ENCODE measurements at regions of chr1 and their contacts with region 1.

Region 1: GRCh38 chr1:27445177-27445936 is 44.6 kb downstream of the WASF2 start:
- DNase-seq: peak in 1 of 35 experiments; percentile 29
- ATAC-seq: peak in 2 of 4 experiments; percentile 34 to 67
- H3K4me3 ChIP-seq: no peak overlapping the region
- H3K4me3 Mint-ChIP-seq: peak overlapping the region; percentile 22 to 59 (median 44)
- H3K27ac ChIP-seq: no peak overlapping the region
- H3K27ac Mint-ChIP-seq: peak overlapping the region; percentile 77 to 87
- H3K4me1 ChIP-seq: peaks cover 10 to 13% of the 10 kb centered on the region in 2 experiments
- H3K4me1 Mint-ChIP-seq: peaks cover 34 to 51% (median 51%) of the 10 kb centered on the region in 3 donors
- H3K27me3 ChIP-seq: no peaks in the 10 kb centered on the region
- H3K27me3 Mint-ChIP-seq: no peaks in the 10 kb centered on the region

Region 2: GRCh38 chr1:27258598-27258997 is 186.8 kb before region 1 on chr1:
- CTCF ChIA-PET with region 1: interaction called in 1 of 2 experiments, 3 read pairs
- POLR2A ChIA-PET with region 1: interaction called in 1 of 2 experiments, 11 read pairs
- DNase-seq: peak in 7 of 35 experiments; percentile 0 to 35 (median 4)
- ATAC-seq: peak; percentile 54 to 87 (median 74)
- H3K4me3 ChIP-seq: no peak overlapping the region
- H3K4me3 Mint-ChIP-seq: peak overlapping the region in 2 of 3 donors; percentile 56 to 58
- H3K27ac ChIP-seq: no peak overlapping the region
- H3K27ac Mint-ChIP-seq: peak overlapping the region; percentile 51 to 76
- H3K4me1 ChIP-seq: peaks cover 16 to 19% of the 10 kb centered on the region in 2 experiments
- H3K4me1 Mint-ChIP-seq: peaks cover 38 to 42% (median 40%) of the 10 kb centered on the region in 3 donors
- H3K27me3 ChIP-seq: no peaks in the 10 kb centered on the region
- H3K27me3 Mint-ChIP-seq: no peaks in the 10 kb centered on the region

Region 3: GRCh38 chr1:27430903-27431600 is 14.3 kb before region 1 on chr1:
- CTCF ChIA-PET with region 1: interaction called in 1 of 2 experiments, 10 read pairs
- POLR2A ChIA-PET with region 1: interaction called, 3 to 7 read pairs
- DNase-seq: peak in 27 of 35 experiments; percentile 5 to 66 (median 17)
- ATAC-seq: peak; percentile 83 to 92 (median 88)
- H3K4me3 ChIP-seq: peak overlapping the region in 1 of 2 donors; percentile 40
- H3K4me3 Mint-ChIP-seq: peak overlapping the region; percentile 31 to 74 (median 64)
- H3K27ac ChIP-seq: peak overlapping the region; percentile 45
- H3K27ac Mint-ChIP-seq: peak overlapping the region; percentile 88 to 91
- H3K4me1 ChIP-seq: peaks cover 60 to 80% of the 10 kb centered on the region in 2 experiments
- H3K4me1 Mint-ChIP-seq: peaks cover 85 to 88% (median 85%) of the 10 kb centered on the region in 3 donors
- H3K27me3 ChIP-seq: no peaks in the 10 kb centered on the region
- H3K27me3 Mint-ChIP-seq: no peaks in the 10 kb centered on the region